ENCODE measurements at regions of chr2 and their contacts with region 1.

Region 1: DNA sequence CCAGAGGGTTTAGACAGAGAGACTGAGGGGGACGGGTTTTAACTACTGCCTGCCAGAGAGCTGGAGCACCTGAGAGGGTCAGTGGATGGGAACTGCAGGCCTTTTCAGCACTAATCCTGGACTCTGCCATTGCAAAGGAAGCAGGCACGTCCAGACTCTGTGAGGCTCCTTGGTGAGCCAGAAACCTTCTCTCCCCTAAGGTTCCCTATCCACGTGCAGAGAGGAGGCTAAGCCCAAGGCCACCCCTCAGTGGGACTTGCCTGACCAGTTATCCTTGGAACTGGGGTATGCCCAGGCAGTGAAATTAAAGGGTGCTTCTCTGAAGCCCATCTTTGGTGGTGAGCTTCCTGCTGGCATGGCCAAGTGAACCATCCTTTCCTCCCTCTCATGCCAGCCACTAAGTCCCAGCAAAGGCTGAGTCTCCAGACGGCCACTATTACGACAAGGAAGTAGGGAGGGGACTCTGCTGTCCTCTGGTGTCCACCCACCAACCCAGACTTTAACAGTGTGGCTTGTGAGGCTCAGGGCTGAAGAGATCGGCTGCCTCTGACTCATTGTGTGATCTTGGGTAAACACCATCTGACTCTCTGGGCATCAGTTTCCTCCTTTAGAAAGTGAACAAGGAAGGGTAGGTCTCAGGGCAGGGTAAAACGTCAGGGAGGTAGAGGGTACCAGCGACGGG is 3.9 kb upstream of the MLPH start:
- DNase-seq: peak; percentile 58 to 90
- ATAC-seq: peak; percentile 57 to 61
- H3K4me3 ChIP-seq: 0 out of 3 replicates have a peak overlapping the region, but pooled peaks have one; percentile 6
- H3K27ac ChIP-seq: peak overlapping the region; percentile 98 to 99
- H3K4me1 ChIP-seq: peaks cover 42% of the 10 kb centered on the region
- CTCF ChIP-seq: no peak
- EP300 ChIP-seq: no peak
- POLR2A ChIP-seq: peak; percentile 52; the same call in 1 of the 2 replicates
- RAD21 ChIP-seq: peak; percentile 31 to 41; a peak in 2 of 5 replicates

Region 2: DNA sequence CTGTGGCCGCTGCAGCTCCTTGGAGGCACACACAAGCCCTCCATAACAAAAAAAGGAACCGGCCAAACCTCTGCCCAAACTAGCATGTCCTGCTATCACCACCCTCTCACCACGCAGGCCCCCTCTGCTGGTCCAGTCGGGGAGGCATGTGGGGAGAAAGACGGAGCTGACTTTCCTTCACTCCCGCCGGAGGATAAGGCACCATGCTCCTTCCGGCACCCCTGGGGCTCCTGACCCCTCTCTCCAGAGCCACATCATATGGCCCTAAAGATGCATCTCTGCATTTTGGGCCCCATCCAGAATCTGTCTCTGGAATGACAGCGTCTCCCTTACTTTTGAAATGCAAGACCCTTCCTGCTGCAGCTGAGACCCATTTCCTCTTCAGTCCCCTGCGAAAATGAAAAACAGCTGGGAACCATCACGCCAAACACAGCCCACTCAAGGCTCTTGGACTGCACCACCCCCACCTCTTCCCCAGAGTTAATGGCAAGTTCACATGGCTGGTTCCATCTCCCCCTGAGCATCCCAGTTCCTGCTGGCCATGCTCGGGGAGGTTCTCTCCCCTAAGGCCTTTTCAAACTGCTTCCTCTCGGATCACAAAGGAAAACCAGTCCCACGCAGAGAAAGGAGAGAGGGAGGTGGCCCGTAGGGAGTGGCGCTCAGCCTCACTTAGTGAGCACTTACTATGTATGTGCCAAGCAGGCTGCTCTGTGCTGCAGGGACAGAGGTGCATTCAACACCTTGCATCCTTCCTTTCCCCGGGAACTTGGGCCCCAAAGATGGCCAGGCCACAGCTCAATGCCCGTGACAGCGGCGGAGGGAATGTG is 31.3 kb before region 1 on chr2:
- CTCF ChIA-PET with region 1: no interaction called
- POLR2A ChIA-PET with region 1: no interaction called
- DNase-seq: no peak
- ATAC-seq: peak in 1 of 2 experiments; percentile 51; a peak in 3 of 6 replicates
- H3K4me3 ChIP-seq: no peak overlapping the region
- H3K27ac ChIP-seq: no peak overlapping the region
- H3K4me1 ChIP-seq: peaks cover 6% of the 10 kb centered on the region; the same call in 2 of the 3 replicates
- CTCF ChIP-seq: no peak
- EP300 ChIP-seq: no peak
- POLR2A ChIP-seq: no peak
- RAD21 ChIP-seq: no peak

Region 3: GRCh38 chr2:237500681-237501424 is 17.7 kb after region 1 on chr2:
- CTCF ChIA-PET with region 1: interaction called, 46 read pairs
- POLR2A ChIA-PET with region 1: interaction called, 57 read pairs
- DNase-seq: peak; percentile 96 to 99
- ATAC-seq: peak; percentile 85 to 86
- H3K4me3 ChIP-seq: peak overlapping the region; percentile 21; the same call in 1 of the 3 replicates
- H3K27ac ChIP-seq: peak overlapping the region; percentile 97 to 98
- H3K4me1 ChIP-seq: peaks cover 94% of the 10 kb centered on the region
- CTCF ChIP-seq: no peak
- EP300 ChIP-seq: peak; percentile 99 to 100
- POLR2A ChIP-seq: no peak
- RAD21 ChIP-seq: peak; percentile 16 to 52; a peak in 3 of 5 replicates

Measured in A549 (cell line).